ENCODE measurements at regions of chr6 and their contacts with region 1.

Region 1: DNA sequence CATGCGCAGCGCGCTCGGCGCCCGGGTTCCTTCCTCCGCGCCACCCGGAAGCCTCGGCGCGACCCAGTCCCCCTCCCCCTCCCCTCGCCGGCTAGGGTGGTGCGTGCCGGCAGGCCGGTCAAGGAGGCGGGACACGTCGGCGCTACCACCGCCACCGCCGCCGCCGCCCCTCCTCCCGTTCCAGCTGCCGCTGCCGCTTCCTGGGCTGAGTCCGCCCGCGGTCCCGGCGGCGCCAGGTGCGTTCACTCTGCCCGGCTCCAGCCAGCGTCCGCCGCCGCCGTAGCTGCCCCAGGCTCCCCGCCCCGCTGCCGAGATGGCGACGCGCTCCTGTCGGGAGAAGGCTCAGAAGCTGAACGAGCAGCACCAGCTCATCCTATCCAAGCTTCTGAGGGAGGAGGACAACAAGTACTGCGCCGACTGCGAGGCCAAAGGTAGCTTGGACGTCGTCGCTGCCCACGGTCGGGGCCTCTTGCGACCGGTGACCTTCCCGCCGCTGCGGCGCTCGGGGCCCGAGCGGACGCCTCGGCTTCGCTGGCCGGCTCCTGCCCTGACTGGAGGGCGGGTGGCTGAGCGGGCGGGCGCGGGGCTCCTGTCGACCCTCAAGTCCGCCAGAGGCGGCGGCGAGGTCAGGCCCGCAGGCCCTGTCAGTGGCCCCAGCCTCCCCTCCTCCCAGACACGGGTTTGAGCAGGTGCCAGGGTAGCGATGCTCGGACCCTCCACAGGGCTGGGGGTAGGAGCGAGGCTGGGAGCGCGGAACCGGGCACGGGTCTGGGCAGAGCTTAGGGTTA is at the start of gene SMAP1:
- DNase-seq: peak; percentile 96
- H3K4me3 Mint-ChIP-seq: peak within 1 kb of the TSS; percentile 90
- H3K27ac Mint-ChIP-seq: peak within 1 kb of the TSS; percentile 88
- H3K4me1 Mint-ChIP-seq: peaks cover 54% of the 10 kb centered on the region
- H3K27me3 Mint-ChIP-seq: no peaks in the 10 kb centered on the region
- total RNA-seq, gene SMAP1: 23.6 to 24.2 TPM

Region 2: DNA sequence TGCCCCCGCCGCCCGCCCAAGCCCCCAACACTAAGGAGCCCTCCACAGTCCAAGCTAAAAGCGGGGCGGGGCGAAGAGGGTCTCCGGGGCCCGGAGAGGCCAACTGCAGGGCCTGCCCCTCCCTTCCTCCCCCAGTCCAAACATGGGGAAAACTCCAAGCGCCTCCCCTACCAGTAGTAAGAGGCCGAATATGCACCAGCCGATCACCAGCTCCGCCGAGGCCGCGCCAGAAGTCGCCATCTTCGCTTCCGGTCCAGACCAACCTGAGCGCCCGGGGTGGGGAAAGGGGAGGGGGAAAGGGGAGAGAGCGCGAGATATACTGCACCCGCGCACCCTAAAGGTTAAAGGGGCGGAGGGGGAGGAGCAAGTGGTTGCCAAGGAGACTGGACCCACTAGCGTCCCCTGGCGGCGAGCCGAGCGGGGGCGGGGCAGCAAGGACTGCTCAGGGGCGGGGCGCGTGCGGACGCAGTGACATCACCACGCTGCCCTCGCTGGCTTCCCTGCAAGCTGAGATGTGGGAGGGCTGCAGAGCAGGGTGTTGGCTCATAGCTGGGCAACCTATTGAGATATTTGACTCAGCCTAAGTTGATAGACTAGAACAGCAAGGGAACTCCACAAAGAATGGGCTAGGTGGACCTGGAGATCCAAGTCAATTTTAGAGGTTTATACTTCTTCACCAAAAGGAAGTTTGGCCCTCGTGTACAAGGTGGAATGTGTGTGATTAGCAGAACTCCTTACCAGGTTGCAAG is 871.1 kb before region 1 on chr6 and contains the start of gene LMBRD1:
- CTCF ChIA-PET with region 1: no interaction called
- POLR2A ChIA-PET with region 1: no interaction called
- intact Hi-C with region 1: loop called (anchors 5 kb)
- DNase-seq: peak; percentile 99
- H3K4me3 Mint-ChIP-seq: peak within 1 kb of the TSS; percentile 87
- H3K27ac Mint-ChIP-seq: peak within 1 kb of the TSS; percentile 89
- H3K4me1 Mint-ChIP-seq: peaks cover 46% of the 10 kb centered on the region
- H3K27me3 Mint-ChIP-seq: no peaks in the 10 kb centered on the region
- total RNA-seq, gene LMBRD1: 17.4 to 18.2 TPM

Region 3: DNA sequence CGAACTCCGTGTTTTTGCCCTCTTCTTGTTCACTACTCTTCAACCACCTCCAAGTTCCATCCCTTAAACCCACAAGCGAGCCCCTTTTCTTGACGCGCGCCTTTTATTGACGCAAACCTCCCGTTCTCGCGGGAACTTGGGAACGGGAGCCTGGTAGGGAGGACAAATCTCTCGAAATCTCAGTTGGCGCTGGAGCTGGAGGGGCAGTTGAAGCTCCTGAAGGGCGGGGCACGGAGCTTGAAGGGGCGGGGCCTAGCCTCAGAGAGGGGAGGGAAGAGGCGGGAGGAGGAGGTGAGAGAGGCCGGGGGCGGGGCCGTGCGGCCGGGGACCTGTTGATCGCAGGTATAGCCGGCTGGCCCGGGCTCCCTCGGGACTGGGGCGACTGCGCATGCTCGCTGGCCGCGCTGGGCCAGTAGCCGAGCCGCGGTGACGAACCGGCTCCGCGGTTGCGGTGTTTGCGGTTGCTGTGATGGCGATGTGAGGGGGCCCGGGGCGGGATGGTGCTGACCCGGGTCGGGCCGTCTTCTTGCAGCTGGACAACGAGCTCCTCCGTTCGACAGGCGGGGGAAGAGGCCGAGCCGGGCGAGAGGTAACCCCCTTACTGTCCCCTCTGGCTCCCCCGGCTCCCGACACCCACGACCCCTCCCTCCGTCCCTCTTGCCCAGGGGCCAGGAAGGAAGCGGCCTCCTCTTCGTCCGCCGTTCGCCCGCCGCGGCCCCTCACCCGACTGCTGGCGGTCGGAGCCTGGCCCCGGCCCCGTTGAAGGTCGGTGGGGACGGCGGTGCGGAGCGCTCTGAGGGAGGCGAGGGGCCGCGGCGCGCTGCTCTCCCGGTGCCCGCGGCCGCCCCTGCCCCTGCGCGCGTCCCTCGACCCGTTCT is 254.6 kb before region 1 on chr6 and contains the start of gene FAM135A:
- CTCF ChIA-PET with region 1: no interaction called
- POLR2A ChIA-PET with region 1: interaction called, 9 read pairs
- intact Hi-C with region 1: loop called (anchors 1 kb)
- DNase-seq: peak; percentile 98
- H3K4me3 Mint-ChIP-seq: peak within 1 kb of the TSS; percentile 88
- H3K27ac Mint-ChIP-seq: peak within 1 kb of the TSS; percentile 75
- H3K4me1 Mint-ChIP-seq: peaks cover 17% of the 10 kb centered on the region
- H3K27me3 Mint-ChIP-seq: no peaks in the 10 kb centered on the region
- total RNA-seq, gene FAM135A: 9.0 to 9.2 TPM

Region 4: GRCh38 chr6:70566751-70567382 is 101.0 kb before region 1 on chr6 and contains the start of gene SDHAF4:
- CTCF ChIA-PET with region 1: interaction called, 3 read pairs
- POLR2A ChIA-PET with region 1: interaction called, 5 read pairs
- intact Hi-C with region 1: loop called (anchors 1 kb)
- DNase-seq: peak; percentile 96
- H3K4me3 Mint-ChIP-seq: peak within 1 kb of the TSS; percentile 84
- H3K27ac Mint-ChIP-seq: peak within 1 kb of the TSS; percentile 60
- H3K4me1 Mint-ChIP-seq: peaks cover 19% of the 10 kb centered on the region
- H3K27me3 Mint-ChIP-seq: no peaks in the 10 kb centered on the region
- total RNA-seq, gene SDHAF4: 13.3 to 13.9 TPM

Region 5: DNA sequence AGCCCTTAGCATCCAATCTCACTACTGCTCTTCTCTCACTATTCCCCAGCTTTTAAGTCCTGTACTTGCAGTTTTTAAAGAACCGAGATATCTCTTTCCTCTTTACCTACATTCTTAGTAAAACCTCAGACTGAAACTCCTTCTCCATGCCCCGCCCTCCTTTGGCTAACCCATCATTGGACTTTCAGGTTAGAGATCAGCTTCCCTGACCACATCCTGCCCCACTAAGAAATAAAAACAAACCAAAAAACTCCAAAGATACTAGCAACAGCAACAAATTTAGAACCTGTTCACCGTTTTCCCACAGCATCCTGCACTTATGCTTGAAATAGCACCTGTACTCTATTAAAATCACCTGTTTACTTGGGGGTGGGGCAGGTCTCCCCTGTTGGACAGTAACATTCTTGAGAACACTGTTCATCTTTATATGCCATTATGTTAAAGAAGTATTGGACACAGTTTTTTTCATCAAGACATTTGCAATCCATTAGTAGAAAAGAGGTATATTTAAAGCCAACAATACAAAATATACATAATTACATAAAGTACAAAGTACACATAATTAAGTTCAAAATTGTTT is 16.5 kb before region 1 on chr6:
- CTCF ChIA-PET with region 1: no interaction called
- POLR2A ChIA-PET with region 1: interaction called, 14 read pairs
- intact Hi-C with region 1: loop called (anchors 1 kb)
- DNase-seq: peak; percentile 80
- H3K4me3 Mint-ChIP-seq: no peak overlapping the region
- H3K27ac Mint-ChIP-seq: peak overlapping the region; percentile 46
- H3K4me1 Mint-ChIP-seq: peaks cover 25% of the 10 kb centered on the region
- H3K27me3 Mint-ChIP-seq: no peaks in the 10 kb centered on the region

Region 6: GRCh38 chr6:70955441-70956190 is 287.7 kb after region 1 on chr6:
- CTCF ChIA-PET with region 1: interaction called, 10 read pairs
- POLR2A ChIA-PET with region 1: interaction called, 4 read pairs
- intact Hi-C with region 1: no loop called
- DNase-seq: peak; percentile 91
- H3K4me3 Mint-ChIP-seq: peak overlapping the region; percentile 70
- H3K27ac Mint-ChIP-seq: no peak overlapping the region
- H3K4me1 Mint-ChIP-seq: peaks cover 11% of the 10 kb centered on the region
- H3K27me3 Mint-ChIP-seq: peaks cover 42% of the 10 kb centered on the region

Region 7: DNA sequence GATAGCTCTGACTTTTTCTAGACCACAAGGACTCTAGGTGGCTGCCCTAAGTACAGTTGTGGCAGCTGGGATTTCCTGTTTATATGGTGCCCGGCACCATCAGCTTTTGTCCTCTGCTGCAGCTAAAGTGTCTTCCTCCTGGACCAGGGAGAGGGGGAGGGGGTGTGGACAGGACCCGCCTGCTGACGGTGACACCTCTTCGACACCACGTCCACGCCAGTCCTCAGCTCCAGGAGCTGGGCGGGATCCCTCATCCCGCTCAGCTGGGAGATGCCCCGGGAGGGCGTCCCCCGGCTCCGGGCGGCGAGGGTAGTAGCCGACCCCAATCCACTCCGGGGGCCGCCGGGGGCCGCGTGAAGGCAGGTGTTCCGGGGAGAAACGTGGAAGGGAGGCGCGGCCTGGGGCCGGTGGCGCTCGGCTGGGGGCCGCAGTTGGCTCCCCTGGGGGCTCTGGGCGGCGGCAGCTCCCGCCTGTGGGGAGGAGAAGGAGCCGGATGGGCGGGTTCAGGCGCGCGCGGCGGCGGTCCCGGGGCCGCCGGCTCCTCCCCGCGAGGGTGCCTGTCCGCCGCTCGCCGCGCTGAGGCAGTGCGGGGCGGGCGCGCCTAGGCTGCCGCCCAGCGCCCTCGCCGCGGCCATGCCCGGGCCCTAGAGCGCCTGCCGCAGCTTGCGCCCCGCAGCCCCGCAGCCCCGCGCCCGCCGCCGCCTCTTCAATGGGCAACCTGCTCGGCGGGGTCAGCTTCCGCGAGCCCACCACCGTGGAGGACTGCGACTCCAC is 620.5 kb after region 1 on chr6 and contains the start of gene OGFRL1:
- CTCF ChIA-PET with region 1: interaction called, 3 read pairs
- POLR2A ChIA-PET with region 1: no interaction called
- intact Hi-C with region 1: loop called (anchors 5 kb)
- DNase-seq: peak; percentile 75
- H3K4me3 Mint-ChIP-seq: peak within 1 kb of the TSS; percentile 69
- H3K27ac Mint-ChIP-seq: peak within 1 kb of the TSS; percentile 33
- H3K4me1 Mint-ChIP-seq: peaks cover 35% of the 10 kb centered on the region
- H3K27me3 Mint-ChIP-seq: no peaks in the 10 kb centered on the region
- total RNA-seq, gene OGFRL1: 3.8 to 4.3 TPM